ENCODE measurements at regions of chrX and their contacts with region 1.

Region 1: GRCh38 chrX:47776292-47777006 is 60.3 kb upstream of the ZNF81 start:
- DNase-seq: no peak
- ATAC-seq: no peak
- H3K4me3 ChIP-seq: no peak overlapping the region
- H3K27ac ChIP-seq: no peak overlapping the region
- H3K4me1 ChIP-seq: no peaks in the 10 kb centered on the region
- H3K27me3 ChIP-seq: peaks cover 0 to 9% (median 0%) of the 10 kb centered on the region in 9 donors
- CTCF ChIP-seq: no peak
- POLR2A ChIP-seq: no peak

Region 2: DNA sequence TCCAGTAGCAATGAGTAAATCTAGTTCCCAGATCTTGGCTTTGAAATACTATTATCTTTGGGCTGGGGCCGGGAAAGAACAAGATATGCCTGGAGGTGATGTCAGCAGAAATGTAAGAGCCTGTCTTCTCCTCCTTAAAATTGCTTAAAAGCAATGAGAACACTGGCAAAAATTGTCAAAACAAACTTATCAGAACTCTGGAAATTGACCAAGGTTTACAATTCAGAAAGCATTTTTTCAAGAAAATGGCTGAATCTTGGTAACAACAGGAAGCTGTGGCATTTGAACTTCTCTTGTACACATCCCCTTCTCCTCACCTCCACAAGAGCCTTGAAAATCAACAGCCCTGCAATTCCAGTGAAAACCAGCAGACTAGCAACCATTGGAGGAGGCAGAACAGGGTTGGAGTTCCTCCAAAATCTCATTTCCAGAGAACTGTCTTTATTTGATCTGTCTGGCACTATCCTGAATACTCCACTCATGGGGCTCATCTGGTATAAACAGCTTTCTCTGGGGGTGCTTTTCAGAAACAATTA is 180.7 kb before region 1 on chrX:
- intact Hi-C with region 1: no loop called
- DNase-seq: no peak
- ATAC-seq: peak in 3 of 4 donors; percentile 61 to 69 (median 69)
- H3K4me3 ChIP-seq: no peak overlapping the region
- H3K27ac ChIP-seq: peak overlapping the region in 4 of 12 donors; percentile 18 to 38 (median 30)
- H3K4me1 ChIP-seq: peaks cover 0 to 8% (median 0%) of the 10 kb centered on the region in 12 donors
- H3K27me3 ChIP-seq: no peaks in the 10 kb centered on the region
- CTCF ChIP-seq: no peak
- POLR2A ChIP-seq: no peak

Region 3: GRCh38 chrX:47798861-47799260 is 22.4 kb after region 1 on chrX:
- intact Hi-C with region 1: loop called in 1 of 10 experiments (anchors 2 kb)
- DNase-seq: no peak
- ATAC-seq: no peak
- H3K4me3 ChIP-seq: no peak overlapping the region
- H3K27ac ChIP-seq: peak overlapping the region in 6 of 12 donors; percentile 11 to 77 (median 66)
- H3K4me1 ChIP-seq: peaks cover 0 to 13% (median 0%) of the 10 kb centered on the region in 12 donors
- H3K27me3 ChIP-seq: peaks cover 0 to 19% (median 0%) of the 10 kb centered on the region in 9 donors
- CTCF ChIP-seq: no peak
- POLR2A ChIP-seq: no peak

Measured in heart left ventricle (tissue), 16 donors.